Activated CD4-positive, alpha-beta memory T cell treated with anti-CD3 and anti-CD28 coated beads for 36 hours (primary cell): ENCODE measurements at regions of chr20 and their contacts with region 1.

Region 1: GRCh38 chr20:13784893-13785715 is at the starts of genes ESF1 and NDUFAF5:
- DNase-seq: peak; percentile 96
- H3K4me3 Mint-ChIP-seq: peak within 1 kb of the TSS; percentile 91
- H3K27ac Mint-ChIP-seq: peak within 1 kb of the TSS; percentile 93
- H3K4me1 Mint-ChIP-seq: peaks cover 51% of the 10 kb centered on the region
- H3K27me3 Mint-ChIP-seq: no peaks in the 10 kb centered on the region
- total RNA-seq, gene ESF1: 17.3 to 17.9 TPM
- total RNA-seq, gene NDUFAF5: 23.8 to 28.3 TPM

Region 2: DNA sequence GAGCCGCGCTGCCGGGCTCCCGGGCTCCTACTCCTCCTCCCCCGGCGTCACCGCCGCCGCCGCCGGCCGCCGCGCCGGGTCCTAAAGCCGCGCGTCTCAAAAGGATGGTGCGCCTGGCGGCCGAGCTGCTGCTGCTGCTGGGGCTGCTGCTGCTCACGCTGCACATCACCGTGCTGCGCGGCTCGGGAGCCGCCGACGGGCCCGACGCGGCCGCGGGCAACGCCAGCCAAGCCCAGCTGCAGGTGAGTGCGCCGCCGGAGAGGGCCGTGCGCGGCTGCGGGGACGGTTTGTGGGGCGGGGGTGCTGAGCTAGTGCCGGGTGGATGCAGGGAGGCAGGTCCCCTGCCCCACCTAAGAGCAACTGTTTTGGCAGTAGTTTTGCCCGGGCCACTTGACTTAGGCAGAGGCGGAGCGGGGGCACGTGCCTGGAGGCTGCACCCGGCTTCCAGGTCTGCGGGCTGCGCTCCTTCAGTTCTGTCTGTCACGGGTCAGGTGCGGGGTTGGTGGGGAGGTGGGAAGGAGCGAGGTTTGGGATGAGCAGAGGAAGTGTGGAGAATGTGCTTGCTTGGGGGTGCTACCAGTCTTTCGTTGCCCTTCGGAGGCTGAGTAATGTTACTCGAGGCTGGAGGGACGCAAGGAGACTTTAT is 563.3 kb before region 1 on chr20:
- CTCF ChIA-PET with region 1: no interaction called
- POLR2A ChIA-PET with region 1: no interaction called
- intact Hi-C with region 1: loop called (anchors 10 kb)
- DNase-seq: peak; percentile 76
- H3K4me3 Mint-ChIP-seq: peak overlapping the region; percentile 69
- H3K27ac Mint-ChIP-seq: no peak overlapping the region
- H3K4me1 Mint-ChIP-seq: peaks cover 15% of the 10 kb centered on the region
- H3K27me3 Mint-ChIP-seq: peaks cover 38% of the 10 kb centered on the region

Region 3: DNA sequence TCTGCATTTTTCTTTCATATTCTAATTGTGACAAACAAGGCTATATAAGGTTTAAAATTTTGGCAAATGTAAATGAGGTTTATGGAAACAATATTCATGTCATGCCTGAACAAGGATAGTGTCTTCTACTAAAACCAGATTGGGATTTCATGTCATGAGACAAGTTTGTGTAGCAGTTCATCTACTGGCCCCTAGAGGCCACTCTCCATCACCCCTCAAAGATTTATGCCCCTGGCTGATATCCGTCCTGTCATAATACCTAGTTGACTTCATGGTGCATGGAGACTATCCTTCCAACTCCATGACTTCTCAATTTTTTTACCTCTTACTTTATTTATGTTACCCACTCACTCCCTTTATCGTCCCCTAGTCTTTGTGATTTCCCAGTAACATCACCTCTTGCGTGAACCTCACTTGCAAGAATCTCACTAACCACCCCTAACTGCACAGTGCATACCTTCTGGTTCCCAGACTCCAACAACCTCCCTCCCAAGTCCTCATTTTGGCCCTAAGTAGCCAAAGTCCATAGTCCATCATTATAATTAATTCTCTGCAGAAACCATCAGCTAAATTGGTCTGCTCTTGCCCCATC is 326.1 kb before region 1 on chr20:
- CTCF ChIA-PET with region 1: no interaction called
- POLR2A ChIA-PET with region 1: no interaction called
- intact Hi-C with region 1: loop called (anchors 5 kb)
- DNase-seq: peak; percentile 11
- H3K4me3 Mint-ChIP-seq: no peak overlapping the region
- H3K27ac Mint-ChIP-seq: no peak overlapping the region
- H3K4me1 Mint-ChIP-seq: no peaks in the 10 kb centered on the region
- H3K27me3 Mint-ChIP-seq: no peaks in the 10 kb centered on the region

Region 4: DNA sequence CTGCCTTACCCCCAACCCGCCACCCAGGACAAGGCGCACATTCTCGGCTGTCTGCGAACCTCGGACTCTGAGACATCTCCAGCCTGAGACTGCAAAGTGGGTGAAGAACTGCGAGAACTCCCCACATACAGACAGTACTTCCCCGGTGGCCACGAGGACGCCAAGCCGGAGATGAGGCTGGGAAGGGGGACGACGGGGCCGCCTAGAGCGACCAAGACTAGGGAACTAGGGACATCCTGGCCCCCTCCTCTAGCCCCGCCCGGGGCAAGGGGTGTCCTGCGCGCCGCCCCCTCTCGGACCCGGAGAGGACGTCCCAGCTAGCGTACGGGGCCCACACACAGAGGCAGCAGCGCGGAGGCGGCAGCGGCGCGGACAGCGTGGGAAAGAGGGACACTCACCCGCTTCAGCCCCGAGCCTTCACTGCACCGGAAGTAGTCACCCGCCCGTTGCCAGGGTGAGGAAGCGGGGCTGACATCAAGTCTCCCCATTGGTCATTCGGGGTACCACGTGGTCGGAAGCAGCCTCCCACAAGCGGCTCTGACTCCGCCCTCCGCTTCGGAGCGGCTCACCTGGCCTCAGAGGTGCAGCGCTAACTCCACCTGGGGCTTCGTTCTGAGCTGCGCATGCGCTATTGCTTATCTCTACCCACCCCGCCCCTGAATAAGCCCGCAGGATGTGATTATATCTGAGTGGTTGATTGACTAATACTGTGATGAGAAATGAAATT is 146.4 kb before region 1 on chr20 and contains the start of gene TASP1:
- CTCF ChIA-PET with region 1: no interaction called
- POLR2A ChIA-PET with region 1: no interaction called
- intact Hi-C with region 1: loop called (anchors 1 kb)
- DNase-seq: peak; percentile 98
- H3K4me3 Mint-ChIP-seq: peak within 1 kb of the TSS; percentile 87
- H3K27ac Mint-ChIP-seq: peak within 1 kb of the TSS; percentile 80
- H3K4me1 Mint-ChIP-seq: peaks cover 19% of the 10 kb centered on the region
- H3K27me3 Mint-ChIP-seq: peaks cover 6% of the 10 kb centered on the region
- total RNA-seq, gene TASP1: 8.2 to 8.9 TPM

Region 5: DNA sequence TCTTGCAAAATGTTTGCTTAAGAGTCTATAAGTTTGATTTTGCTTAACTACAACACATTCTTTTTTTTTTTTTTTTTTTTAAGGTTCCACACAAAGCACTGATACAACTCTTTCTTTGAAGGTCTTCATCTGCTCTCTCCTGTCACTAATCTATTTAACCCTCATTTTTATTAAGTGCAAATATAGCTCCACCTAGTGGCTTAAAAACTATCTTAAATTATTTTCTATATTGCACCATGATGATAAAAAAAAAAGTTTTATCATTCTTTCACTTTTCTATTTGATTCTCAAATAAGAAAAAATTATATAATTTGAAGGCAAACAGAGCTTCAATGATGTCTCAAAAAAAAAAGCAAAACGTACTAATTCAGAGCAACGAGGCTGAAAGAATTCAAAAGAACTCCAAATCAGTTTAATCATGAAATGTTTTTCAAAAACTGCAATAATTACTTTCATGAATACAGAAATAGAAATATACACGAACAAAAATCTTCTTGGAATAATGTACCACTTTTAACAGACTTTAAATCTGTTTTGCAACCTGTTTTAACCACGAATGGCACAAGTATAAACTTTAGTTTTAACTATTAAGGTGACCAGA is 13.2 kb before region 1 on chr20:
- CTCF ChIA-PET with region 1: interaction called, 22 read pairs
- POLR2A ChIA-PET with region 1: interaction called, 4 read pairs
- intact Hi-C with region 1: loop called (anchors 1 kb)
- DNase-seq: no peak
- H3K4me3 Mint-ChIP-seq: no peak overlapping the region
- H3K27ac Mint-ChIP-seq: no peak overlapping the region
- H3K4me1 Mint-ChIP-seq: peaks cover 15% of the 10 kb centered on the region
- H3K27me3 Mint-ChIP-seq: no peaks in the 10 kb centered on the region

Region 6: DNA sequence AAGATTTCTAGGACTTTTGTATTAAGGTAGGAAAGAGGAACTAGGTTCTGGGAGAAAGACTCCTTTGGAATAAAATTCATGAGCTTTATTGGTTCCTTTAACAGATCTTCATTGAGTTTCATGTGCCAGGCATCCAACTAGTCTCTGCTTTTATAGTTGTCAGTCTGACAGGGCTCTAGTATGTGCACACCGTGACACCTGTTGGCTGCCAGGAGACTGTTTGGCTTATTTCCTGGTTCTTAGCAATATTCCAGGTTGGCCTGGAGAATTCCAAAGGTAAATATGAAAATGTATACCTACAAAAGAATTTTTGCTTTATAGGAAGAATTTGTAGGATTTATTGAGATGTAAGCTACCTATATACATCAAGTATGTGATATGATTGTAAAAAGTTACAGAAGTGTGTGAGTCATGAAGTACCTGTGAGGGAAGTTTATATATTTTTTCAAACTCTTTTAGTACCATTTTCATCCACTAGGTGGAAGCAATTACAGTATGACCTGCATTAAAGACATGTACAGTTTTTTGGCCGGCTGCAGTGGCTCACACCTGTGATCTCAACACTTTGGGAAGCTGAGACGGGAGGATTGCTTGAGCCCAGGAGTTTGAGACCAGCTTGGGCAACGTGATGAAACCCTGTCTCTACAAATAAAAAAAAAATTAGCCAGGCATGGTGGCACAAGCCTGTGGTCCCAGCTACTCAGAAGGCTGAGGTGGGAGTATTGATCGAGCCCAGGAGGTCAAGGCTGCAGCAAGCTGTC is 35.0 kb after region 1 on chr20:
- CTCF ChIA-PET with region 1: interaction called, 10 read pairs
- POLR2A ChIA-PET with region 1: no interaction called
- intact Hi-C with region 1: loop called (anchors 2 kb)
- DNase-seq: peak; percentile 11
- H3K4me3 Mint-ChIP-seq: no peak overlapping the region
- H3K27ac Mint-ChIP-seq: no peak overlapping the region
- H3K4me1 Mint-ChIP-seq: peaks cover 18% of the 10 kb centered on the region
- H3K27me3 Mint-ChIP-seq: no peaks in the 10 kb centered on the region